ENCODE measurements at regions of chr6 and their contacts with region 1.

Region 1: DNA sequence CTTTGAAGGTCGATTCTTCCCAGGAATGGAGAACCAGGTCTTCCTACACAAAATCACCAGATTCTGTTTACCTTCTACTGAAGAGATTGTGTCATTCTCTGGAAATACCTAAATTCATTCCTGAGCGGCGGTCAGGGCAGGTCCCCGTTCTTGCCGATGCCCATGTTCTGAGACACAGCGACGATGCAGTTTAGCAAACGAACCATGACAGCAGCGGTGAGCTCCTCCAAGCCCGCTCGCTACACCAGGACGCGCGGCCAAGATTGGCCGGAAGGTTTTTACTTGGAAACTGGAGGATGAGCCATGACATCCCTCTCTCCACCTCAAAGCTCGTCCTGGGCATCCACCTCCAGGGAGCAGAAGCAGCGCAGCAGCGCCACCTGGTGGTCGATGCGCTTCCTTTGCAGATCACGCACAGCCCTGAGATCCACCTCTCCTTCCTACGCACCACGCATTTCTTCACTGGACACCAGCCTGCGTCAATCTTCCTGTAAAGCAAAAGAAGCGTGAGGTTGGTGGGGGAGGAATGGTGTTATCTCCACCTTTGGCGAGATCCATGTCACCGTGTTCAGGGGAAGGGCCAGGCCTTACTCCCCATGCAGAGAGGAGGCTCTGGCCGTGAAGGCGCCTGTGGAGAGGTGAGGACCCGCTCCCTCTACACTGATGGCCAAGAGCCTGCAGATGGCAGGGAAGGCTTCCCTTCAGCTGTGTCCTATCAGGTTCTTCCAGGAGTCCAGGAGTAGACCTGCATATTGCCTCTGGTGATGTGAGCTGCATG is 9.9 kb upstream of the HLA-B start:
- DNase-seq: peak; percentile 74
- H3K4me3 ChIP-seq: peak overlapping the region; percentile 42
- H3K27ac ChIP-seq: no peak overlapping the region
- H3K27me3 ChIP-seq: peaks cover 29% of the 10 kb centered on the region
- CTCF ChIP-seq: peak; percentile 96

Region 2: DNA sequence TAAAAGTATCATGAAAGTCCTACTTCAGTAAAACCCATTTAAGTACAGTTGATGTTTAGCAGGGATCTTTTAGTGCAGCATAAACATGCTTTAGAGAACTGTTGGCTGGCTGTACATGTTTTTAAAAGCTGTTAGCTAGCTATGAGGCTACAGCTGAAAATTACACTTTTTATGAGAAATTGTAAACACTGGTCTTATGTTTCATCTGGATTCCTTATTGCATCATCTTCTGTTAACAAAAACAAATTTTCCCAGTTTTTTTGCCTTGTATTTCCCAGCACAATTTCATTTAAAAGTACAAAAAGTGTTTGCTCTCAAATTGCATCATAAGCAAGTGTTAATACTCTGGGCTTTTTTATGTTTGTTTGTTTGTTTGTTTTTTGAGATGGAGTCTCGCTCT is 895.9 kb before region 1 on chr6:
- CTCF ChIA-PET with region 1: no interaction called
- POLR2A ChIA-PET with region 1: no interaction called
- DNase-seq: no peak
- H3K4me3 ChIP-seq: no peak overlapping the region
- H3K27ac ChIP-seq: no peak overlapping the region
- H3K27me3 ChIP-seq: peaks cover 42% of the 10 kb centered on the region
- CTCF ChIP-seq: no peak

Region 3: GRCh38 chr6:31139599-31139998 is 227.3 kb before region 1 on chr6:
- CTCF ChIA-PET with region 1: interaction called, 48 read pairs
- POLR2A ChIA-PET with region 1: no interaction called
- DNase-seq: no peak
- H3K4me3 ChIP-seq: no peak overlapping the region
- H3K27ac ChIP-seq: no peak overlapping the region
- H3K27me3 ChIP-seq: no peaks in the 10 kb centered on the region
- CTCF ChIP-seq: no peak

Region 4: GRCh38 chr6:31379850-31380249 is 13.0 kb after region 1 on chr6:
- CTCF ChIA-PET with region 1: interaction called, 35 read pairs
- POLR2A ChIA-PET with region 1: no interaction called
- DNase-seq: no peak
- H3K4me3 ChIP-seq: no peak overlapping the region
- H3K27ac ChIP-seq: no peak overlapping the region
- H3K27me3 ChIP-seq: peaks cover 30% of the 10 kb centered on the region
- CTCF ChIP-seq: no peak